ENCODE measurements at regions of chr11 and their contacts with region 1.

Region 1: DNA sequence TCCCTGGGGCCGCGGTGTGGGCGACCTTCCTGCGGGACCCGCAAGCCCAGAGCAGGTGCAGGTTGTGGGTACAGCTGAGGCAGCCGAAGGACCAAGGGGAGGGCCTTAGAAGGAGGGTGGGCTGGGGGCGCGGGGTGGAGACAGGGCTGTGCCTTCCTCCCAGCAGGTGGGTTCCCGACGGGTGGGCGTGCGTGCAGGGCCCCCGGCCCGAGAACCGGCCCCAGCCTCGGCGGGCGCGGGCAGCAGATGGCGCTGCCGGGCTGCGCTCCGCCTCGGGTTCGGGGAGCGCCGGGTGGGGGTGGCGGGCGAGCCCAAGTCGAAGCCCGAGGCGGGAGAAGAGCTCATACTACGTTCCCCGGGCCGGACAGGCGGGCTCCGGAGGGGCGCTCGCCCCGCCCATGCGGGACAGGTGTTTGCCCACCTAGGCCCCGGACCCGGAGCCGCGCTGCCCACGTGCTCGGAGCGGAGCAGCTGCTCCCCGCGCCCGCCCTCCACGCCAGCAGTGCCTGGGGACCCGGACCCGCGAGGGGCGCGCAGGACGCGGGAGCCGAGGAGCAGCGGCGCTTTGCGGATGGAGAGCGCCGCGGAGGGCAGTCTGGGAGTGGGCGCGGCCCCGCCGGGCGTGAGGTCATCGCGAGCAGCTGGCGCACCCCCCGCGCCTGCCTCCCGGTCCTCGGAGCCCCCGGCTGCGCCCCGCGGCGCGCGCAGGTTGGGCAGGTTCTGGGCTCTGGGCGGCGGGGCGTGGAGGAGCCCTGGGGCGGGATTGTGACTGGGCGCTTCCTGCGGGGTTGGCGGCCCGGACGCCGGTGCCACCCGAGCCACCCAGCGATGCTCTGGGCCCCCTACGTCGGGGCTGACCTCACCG is 25.3 kb downstream of the DUSP8 start:
- DNase-seq: peak; percentile 49 to 87 (median 64)
- ATAC-seq: peak; percentile 59 to 76 (median 72)
- H3K4me3 ChIP-seq: peak overlapping the region; percentile 23 to 59 (median 46)
- H3K27ac ChIP-seq: no peak overlapping the region
- H3K4me1 ChIP-seq: peaks cover 5 to 17% (median 15%) of the 10 kb centered on the region in 3 donors
- H3K27me3 ChIP-seq: no peaks in the 10 kb centered on the region
- CTCF ChIP-seq: peak; percentile 45 to 72 (median 59)

Region 2: DNA sequence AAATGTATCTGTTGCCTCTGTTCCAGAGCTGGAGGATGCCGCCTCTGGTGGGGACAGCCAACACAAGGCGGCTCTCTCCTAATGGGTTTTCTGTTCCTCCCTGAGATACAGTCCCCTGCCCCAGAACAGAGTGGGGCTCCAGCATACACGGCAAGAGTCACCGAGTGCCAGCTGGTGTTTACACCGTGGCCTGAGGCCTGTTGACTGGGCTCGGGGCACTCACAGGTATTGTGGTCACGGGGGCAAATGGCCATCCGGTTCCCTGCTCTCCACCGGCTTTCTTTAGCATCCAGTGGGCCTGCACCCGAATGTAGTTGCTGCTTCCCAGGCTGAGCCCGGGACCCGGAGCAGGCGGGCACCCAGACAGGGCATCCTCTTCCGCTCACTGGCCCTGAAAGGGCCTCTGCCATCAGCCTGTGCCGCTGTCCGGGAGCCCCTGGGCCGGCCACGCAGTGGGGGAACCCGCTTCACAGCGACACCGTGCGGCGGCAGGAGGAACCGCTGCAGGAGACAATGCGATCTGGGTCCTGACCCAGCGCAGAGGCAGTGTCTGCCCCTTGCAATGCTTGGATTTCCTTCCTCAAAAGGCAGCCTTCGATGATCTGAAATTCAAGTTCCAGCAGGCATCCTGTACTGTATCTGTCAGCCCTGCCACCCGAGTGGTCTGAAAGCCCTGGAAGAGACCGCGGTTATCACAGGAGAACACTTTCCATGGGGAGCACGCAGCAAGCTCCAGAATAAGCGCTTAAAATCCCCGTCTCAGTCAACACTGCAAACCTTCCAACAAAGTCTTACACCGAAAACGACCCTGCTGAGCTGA is 81.9 kb after region 1 on chr11:
- intact Hi-C with region 1: loop called in 1 of 3 experiments (anchors 5 kb)
- DNase-seq: peak in 5 of 6 donors; percentile 34 to 91 (median 69)
- ATAC-seq: peak; percentile 53 to 92 (median 80)
- H3K4me3 ChIP-seq: no peak overlapping the region
- H3K27ac ChIP-seq: no peak overlapping the region
- H3K4me1 ChIP-seq: peaks cover 0 to 4% (median 0%) of the 10 kb centered on the region in 3 donors
- H3K27me3 ChIP-seq: no peaks in the 10 kb centered on the region
- CTCF ChIP-seq: peak; percentile 88 to 97 (median 93)

Region 3: DNA sequence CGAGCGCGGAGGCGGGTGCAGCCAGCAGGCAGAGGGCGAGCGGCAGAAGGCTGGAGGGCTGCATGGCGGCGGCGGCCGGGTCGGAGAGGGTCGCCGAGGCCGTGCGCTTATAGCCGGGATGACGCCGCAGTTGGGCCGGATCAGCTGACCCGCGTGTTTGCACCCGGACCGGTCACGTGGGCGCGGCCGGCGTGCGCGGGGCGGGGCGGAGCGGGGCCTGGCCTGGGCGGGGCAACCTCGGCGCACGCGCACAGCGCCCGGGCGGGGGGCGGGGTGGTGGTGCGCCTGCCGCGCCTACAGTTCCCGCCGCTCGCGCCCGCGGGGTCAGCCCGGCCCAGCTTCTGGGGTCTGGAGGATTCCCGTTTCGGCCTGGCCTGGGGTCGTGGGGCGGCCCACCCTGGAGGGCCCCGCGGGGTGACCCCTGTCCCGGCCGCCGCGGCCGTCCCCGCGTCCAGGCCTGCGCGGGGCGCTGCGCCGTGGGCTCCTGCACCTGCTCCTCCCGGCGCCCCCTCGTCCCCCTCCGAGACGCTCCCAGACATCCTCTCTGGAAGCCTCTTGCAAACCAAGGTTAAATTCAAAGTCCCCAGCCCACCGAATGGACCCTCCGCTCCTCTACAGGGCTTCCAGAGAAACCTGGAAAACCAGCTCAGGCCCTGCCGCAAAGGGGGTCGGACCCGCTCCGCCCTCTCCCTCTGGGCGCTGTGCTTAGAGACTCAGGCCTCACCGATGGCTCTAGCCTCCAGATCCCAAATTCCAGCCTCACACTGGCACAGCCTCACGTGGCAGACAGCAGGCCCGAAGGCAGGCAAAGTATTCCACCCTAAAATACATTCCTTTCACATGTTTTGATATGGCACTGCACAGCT is 217.3 kb after region 1 on chr11 and contains the start of gene CTSD:
- intact Hi-C with region 1: no loop called
- DNase-seq: peak; percentile 84 to 99 (median 92)
- ATAC-seq: peak; percentile 78 to 91 (median 87)
- H3K4me3 ChIP-seq: peak within 1 kb of the TSS; percentile 92 to 100 (median 100)
- H3K27ac ChIP-seq: peak within 1 kb of the TSS; percentile 69 to 93 (median 88)
- H3K4me1 ChIP-seq: peaks cover 9 to 24% (median 15%) of the 10 kb centered on the region in 3 donors
- H3K27me3 ChIP-seq: no peaks in the 10 kb centered on the region
- CTCF ChIP-seq: no peak
- total RNA-seq, gene CTSD: 231 to 596 (median 310) TPM

Measured in pancreas (tissue), 10 donors.